ENCODE measurements at regions of chr9 and their contacts with region 1.

Region 1: DNA sequence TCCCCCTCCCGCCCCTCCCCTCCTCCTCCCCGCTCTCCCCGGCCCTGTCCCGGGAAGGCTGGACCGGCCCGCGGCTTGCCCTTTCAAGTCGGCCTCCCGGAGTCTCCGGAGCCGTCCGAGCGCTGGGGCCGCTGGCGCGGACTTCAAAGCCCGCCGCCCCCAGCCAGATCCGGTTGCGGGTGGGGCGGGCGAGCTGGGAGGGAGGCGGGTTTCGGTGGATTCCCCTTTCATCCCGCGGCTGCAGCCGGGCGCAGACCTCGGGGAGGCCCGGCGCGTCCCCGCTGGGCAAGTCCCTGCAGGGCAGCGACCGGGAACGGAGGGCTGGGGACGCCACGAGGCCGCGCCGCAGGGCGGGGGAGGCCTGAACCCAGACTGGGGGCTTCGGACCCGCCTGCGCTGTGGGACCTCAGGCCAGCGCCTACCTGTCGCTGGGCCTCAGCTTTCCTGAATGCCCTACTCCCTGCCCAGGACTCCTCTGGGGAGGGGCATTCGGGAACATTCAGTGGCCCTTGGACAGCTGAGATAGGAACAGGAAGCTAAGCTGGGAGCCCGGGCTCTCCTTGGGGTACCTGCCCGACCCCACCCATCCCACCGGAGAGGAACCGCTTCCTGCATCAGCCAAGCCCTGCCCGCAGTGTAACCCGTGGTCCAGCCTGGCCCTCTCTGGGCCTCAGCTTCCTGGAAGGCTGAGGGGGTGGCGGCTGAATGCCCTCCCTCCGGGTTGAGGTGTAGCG is 23.4 kb downstream of the C9orf50 start:
- DNase-seq: peak; percentile 68
- ATAC-seq: peak; percentile 67
- H3K4me3 Mint-ChIP-seq: peak overlapping the region; percentile 67
- H3K27ac Mint-ChIP-seq: peak overlapping the region; percentile 80
- H3K4me1 Mint-ChIP-seq: peaks cover 32% of the 10 kb centered on the region
- H3K27me3 Mint-ChIP-seq: peaks cover 10% of the 10 kb centered on the region

Region 2: GRCh38 chr9:129473523-129474229 is 123.8 kb before region 1 on chr9:
- POLR2A ChIA-PET with region 1: no interaction called
- DNase-seq: no peak
- ATAC-seq: no peak
- H3K4me3 Mint-ChIP-seq: no peak overlapping the region
- H3K27ac Mint-ChIP-seq: no peak overlapping the region
- H3K4me1 Mint-ChIP-seq: peaks cover 10% of the 10 kb centered on the region
- H3K27me3 Mint-ChIP-seq: no peaks in the 10 kb centered on the region

Region 3: GRCh38 chr9:129586685-129587084 is 10.8 kb before region 1 on chr9:
- POLR2A ChIA-PET with region 1: interaction called, 14 read pairs
- DNase-seq: no peak
- ATAC-seq: peak; percentile 47
- H3K4me3 Mint-ChIP-seq: peak overlapping the region; percentile 18
- H3K27ac Mint-ChIP-seq: peak overlapping the region; percentile 83
- H3K4me1 Mint-ChIP-seq: peaks cover 44% of the 10 kb centered on the region
- H3K27me3 Mint-ChIP-seq: peaks cover 11% of the 10 kb centered on the region

Region 4: DNA sequence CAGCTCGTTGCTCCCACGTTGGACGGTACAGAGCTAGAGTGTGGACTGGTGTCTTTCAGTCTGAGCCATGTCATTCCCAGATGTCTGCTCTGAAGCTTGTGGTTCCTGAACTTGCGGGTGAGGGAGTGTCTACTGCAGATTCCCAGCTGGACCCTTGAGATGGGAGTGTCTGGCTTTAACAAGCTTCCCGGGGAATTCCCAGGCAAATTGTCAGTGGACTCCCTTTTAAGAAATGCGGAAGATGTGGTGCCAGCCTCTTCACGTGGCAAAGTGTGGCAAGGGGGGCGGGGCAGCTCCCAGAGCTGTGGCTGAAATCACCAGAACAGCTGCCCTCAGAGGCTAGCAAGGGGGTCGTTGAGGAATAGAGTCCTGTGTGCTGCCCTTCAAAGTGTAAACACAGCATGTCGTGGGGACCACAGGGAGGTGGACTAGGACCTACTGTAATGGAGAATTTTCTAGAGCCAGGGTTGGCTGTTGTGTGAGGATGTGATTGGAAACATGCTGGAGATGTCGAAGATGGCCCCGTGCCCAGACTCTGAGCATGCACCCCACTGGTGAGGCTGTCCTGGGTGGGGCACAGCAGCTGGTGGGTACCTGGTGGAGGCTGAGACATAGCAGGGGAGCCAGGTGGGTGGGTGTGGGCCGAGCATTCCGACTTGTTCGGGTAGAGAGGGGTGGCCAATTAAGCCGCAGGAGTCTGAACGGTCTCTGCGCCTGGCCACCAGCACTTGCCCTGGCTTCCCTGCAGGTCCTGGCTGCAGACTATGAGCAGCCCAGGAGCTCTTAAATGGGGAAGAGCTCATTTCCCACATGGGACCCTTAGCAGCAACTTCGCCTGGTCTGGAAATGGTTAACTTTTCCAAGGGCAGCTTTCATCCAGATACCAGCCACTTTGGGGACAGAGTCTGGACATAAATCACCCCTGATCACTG is 105.3 kb after region 1 on chr9:
- POLR2A ChIA-PET with region 1: no interaction called
- DNase-seq: no peak
- ATAC-seq: no peak
- H3K4me3 Mint-ChIP-seq: no peak overlapping the region
- H3K27ac Mint-ChIP-seq: no peak overlapping the region
- H3K4me1 Mint-ChIP-seq: no peaks in the 10 kb centered on the region
- H3K27me3 Mint-ChIP-seq: peaks cover 32% of the 10 kb centered on the region

Measured in activated naive CD8-positive, alpha-beta T cell treated with anti-CD3 and anti-CD28 coated beads, Interleukin-2, amount 10 ng/mL, durations not matched to agents 7 days and 5 days (primary cell).